Sigmoid colon (tissue), 7 donors: ENCODE measurements at regions of chr6 and their contacts with region 1.

Region 1: GRCh38 chr6:5260661-5261544 is at the starts of genes FARS2 and LYRM4:
- DNase-seq: peak; percentile 92
- H3K4me3 ChIP-seq: peak within 1 kb of the TSS; percentile 73 to 85 (median 78)
- H3K27ac ChIP-seq: peak within 1 kb of the TSS; percentile 92 to 96 (median 93)
- H3K4me1 ChIP-seq: peaks cover 0 to 32% (median 20%) of the 10 kb centered on the region in 4 donors
- H3K27me3 ChIP-seq: no peaks in the 10 kb centered on the region
- CTCF ChIP-seq: peak in 3 of 4 experiments; percentile 33 to 63 (median 34)
- EP300 ChIP-seq: no peak
- POLR2A ChIP-seq: peak in 1 of 2 donors; percentile 13
- total RNA-seq, gene FARS2: 11.7 to 21.0 (median 14.8) TPM
- total RNA-seq, gene LYRM4: 18.3 to 29.3 (median 25.5) TPM

Region 2: DNA sequence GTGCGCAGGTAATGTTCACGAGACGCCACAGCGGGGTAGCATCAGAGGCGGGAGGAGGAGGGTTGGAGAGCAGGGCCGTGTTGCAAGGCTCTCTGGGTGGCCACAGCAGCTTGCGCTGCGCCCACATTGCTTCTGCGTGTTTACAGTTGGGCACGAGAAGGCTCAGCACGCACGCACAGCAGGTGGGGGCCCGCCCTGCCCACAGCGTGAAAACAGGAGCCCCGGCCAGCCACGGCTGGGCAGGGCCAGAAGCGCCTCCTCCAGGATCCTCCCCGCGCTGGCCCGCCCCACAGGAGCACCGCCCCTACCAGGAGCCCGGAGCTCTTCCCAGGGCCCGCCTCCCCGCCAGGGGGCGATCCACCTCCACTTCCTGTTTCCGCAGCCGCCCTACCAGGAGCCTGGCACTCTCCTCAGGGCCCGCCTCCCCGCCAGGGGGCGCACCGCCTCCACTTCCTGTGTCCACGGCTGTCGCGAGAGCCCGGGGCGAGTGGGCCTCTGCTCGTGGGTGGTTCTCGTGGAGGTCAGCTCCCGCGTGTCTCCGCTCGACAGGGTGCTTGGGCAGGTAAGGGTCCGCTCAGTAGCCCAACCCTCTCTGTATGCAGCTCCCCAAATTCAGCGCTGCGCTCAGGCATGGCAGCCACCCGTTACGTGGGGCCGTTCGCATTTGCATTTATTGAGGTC is 1411.8 kb before region 1 on chr6 and contains the start of gene FAM50B:
- intact Hi-C with region 1: no loop called
- DNase-seq: peak; percentile 96
- H3K4me3 ChIP-seq: peak within 1 kb of the TSS; percentile 39 to 55 (median 49)
- H3K27ac ChIP-seq: peak within 1 kb of the TSS; percentile 67 to 80 (median 73)
- H3K4me1 ChIP-seq: peaks cover 0 to 25% (median 8%) of the 10 kb centered on the region in 4 donors
- H3K27me3 ChIP-seq: no peaks in the 10 kb centered on the region
- CTCF ChIP-seq: peak; percentile 83 to 99 (median 96)
- EP300 ChIP-seq: no peak
- POLR2A ChIP-seq: no peak
- total RNA-seq, gene FAM50B: 9.6 to 16.1 (median 13.3) TPM

Region 3: DNA sequence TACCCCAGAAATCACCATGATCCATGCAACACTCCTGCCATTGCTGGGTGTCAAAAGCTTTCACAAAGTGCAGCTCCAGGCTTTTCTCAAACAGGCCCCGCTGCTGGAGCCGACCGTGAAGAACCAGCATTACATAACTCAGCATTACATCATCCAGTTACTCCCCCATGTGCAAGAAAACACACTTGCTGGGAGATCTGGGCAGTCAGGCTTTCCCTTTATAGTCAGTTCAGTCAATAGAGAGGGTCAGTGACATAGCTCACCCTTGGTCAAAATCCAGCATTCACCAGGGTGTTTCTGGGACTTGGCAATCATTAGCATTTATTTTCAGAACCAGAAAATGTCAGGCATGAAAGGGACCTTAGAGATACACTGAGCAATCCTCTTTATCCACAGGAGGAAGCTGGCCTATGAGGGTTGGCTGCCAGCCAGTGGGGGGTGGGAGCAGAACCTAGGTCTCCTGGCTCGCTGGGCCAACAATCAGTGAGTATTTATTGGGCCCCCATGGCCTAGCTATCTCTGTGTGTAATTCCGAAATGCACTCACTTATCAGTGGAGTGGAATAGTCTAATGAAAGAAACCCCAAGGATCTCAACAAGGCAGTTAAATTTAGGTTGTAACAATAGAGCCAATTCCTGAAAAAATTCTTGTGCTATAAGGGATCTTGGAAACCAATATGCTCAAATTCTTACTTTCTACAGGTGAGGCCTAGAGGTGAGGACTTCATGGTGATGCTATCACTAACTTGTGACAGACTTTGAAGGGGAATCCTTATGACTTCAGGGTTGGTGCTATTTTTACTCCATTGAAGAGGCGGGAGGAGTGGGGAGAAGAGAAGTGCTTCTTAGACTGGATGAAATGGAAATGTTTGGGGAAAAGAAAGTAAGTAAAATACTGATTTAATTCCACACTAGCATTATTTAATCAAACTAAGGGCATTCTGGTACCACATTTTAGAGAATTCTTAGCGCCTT is 54.7 kb before region 1 on chr6:
- intact Hi-C with region 1: loop called (anchors 2 kb)
- DNase-seq: peak; percentile 84
- H3K4me3 ChIP-seq: no peak overlapping the region
- H3K27ac ChIP-seq: peak overlapping the region; percentile 43 to 87 (median 76)
- H3K4me1 ChIP-seq: peaks cover 0 to 66% (median 62%) of the 10 kb centered on the region in 4 donors
- H3K27me3 ChIP-seq: no peaks in the 10 kb centered on the region
- CTCF ChIP-seq: no peak
- EP300 ChIP-seq: no peak
- POLR2A ChIP-seq: no peak

Region 4: DNA sequence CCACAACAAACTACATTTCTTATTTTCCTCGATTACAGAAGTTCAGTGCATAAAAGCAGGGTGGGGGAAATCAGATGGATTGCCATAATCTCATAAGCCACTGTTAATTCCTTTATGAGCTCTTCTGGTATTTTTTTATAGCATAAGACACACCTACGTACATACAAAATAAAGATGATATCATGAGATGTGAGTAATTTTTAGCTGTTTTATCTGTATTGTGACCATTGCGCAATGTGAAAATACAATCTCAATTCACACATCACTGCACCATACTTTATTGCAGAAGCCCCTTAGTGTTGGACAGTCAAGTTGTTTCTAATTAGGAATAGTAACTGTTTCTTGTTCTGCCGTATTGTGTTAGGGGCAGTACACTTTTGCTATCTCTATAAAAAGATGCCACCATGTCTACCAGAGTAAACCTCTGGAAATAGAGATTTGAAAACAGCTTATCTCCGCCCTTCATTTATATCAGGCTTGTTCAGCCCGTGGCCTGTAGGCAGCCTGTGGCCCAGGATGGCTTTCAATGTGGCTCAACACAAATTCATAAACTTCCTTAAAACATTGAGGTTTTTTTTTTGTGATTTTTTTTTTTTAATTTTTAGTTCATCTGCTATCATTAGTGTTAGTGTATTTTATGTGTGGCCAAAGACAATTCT is 90.8 kb after region 1 on chr6:
- intact Hi-C with region 1: no loop called
- DNase-seq: no peak
- H3K4me3 ChIP-seq: no peak overlapping the region
- H3K27ac ChIP-seq: no peak overlapping the region
- H3K4me1 ChIP-seq: no peaks in the 10 kb centered on the region
- H3K27me3 ChIP-seq: no peaks in the 10 kb centered on the region
- CTCF ChIP-seq: no peak
- EP300 ChIP-seq: no peak
- POLR2A ChIP-seq: no peak

Region 5: GRCh38 chr6:5670811-5671561 is 410.1 kb after region 1 on chr6:
- intact Hi-C with region 1: loop called (anchors 5 kb)
- DNase-seq: no peak
- H3K4me3 ChIP-seq: no peak overlapping the region
- H3K27ac ChIP-seq: peak overlapping the region in 3 of 4 donors; percentile 62 to 73 (median 66)
- H3K4me1 ChIP-seq: peaks cover 0 to 33% (median 30%) of the 10 kb centered on the region in 4 donors
- H3K27me3 ChIP-seq: no peaks in the 10 kb centered on the region
- CTCF ChIP-seq: no peak
- EP300 ChIP-seq: no peak
- POLR2A ChIP-seq: no peak